WTC11 (cell line): ENCODE measurements at regions of chr15 and their contacts with region 1.

Region 1: DNA sequence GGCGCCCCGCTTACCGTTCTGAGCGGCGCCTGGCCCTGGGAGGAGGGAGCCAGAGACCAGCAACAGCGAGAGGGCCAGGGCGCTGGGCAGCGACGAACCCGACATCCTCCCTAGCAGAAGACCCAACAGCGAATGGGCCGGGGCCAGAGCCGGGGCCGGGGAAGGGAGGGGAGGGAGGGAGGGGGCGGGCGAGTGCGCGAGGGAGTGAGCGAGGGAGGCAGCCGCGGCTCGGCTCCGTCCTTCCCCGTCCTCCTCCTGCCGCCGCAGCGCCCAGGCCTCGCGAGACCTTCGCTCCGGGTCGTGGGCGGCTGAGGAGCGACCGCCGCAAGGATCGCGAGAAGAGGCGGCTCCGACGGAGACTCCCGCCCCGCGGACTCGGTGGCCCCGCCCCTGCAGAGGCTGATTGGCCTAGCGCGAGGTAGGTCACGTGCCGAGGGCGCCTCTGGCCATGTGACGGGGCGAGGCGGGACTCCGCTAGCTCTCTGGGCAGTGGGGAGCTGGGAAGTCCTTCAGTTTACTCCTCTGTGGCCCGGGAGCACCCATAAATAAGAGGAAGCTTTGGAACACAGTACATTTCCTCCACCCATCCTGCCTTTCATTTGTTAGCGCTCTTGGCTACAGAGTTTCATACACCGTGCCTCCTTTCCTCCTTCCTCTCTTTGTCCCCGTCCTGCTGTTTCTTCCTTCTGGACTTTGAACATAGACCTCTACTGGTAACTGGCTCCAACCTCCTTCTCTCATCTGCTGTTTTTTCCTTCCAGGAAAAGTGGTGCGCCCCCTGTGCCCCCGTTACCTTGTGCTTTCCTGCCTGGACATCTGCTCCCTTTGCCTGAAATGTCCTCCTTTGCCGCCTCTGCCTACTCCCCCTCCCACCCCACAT is at the start of gene NPTN:
- DNase-seq: peak; percentile 99
- ATAC-seq: peak; percentile 92
- H3K4me3 Mint-ChIP-seq: peak within 1 kb of the TSS; percentile 76
- H3K27ac Mint-ChIP-seq: peak within 1 kb of the TSS; percentile 97
- H3K4me1 Mint-ChIP-seq: peaks cover 57% of the 10 kb centered on the region
- H3K27me3 Mint-ChIP-seq: peaks cover 4% of the 10 kb centered on the region
- CTCF ChIP-seq: no peak
- total RNA-seq, gene NPTN: 96.1 to 116 TPM (median 102 TPM) in 3 replicates

Region 2: DNA sequence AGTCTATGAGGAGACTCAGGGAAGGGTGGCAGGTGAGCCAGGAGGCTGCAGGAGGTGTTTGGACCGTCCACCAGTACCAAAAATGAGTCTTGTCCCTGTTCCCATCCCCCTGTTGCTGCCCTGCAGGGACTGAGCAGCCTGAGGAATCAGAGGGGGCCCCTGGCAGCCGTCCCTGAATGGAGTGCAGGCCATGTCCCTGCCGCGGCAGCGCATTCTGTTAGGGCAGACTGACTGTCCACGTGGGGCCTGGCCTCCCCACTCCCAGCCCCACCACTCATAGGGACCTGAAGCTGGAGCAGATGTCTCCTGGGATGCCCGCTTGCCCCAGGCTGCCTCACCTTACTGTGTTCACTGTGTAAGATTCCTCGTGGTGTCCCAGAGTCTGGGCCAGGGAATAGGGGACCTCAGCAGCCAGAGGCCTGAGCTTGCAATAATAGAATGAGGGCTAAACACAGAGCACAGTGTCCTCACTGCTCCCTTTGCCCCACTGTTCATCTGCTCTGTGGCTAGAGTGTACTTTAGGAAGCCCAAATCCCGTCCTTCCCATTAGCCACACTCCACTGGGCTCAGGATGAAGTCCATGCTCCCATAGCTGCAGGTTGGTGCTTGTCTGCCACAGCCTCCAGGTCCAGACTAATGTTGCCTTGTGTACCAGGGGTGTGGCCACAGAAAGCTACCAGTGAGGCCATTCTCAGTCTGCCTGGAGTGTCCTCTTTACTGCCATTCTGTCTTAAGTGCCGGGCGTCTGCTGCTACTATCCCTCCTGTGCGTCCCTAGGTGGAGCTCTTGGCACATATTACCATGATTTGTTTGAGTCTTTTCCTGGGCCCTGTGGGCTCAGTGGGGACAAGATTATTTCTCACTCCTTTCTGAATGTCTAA is 327.8 kb before region 1 on chr15:
- CTCF ChIA-PET with region 1: interaction called, 13 read pairs
- POLR2A ChIA-PET with region 1: no interaction called
- DNase-seq: peak; percentile 57
- ATAC-seq: peak; percentile 95
- H3K4me3 Mint-ChIP-seq: no peak overlapping the region
- H3K27ac Mint-ChIP-seq: no peak overlapping the region
- H3K4me1 Mint-ChIP-seq: peaks cover 3% of the 10 kb centered on the region
- H3K27me3 Mint-ChIP-seq: no peaks in the 10 kb centered on the region
- CTCF ChIP-seq: 0 out of 2 replicates have a peak, but pooled peaks have one; percentile 14

Region 3: DNA sequence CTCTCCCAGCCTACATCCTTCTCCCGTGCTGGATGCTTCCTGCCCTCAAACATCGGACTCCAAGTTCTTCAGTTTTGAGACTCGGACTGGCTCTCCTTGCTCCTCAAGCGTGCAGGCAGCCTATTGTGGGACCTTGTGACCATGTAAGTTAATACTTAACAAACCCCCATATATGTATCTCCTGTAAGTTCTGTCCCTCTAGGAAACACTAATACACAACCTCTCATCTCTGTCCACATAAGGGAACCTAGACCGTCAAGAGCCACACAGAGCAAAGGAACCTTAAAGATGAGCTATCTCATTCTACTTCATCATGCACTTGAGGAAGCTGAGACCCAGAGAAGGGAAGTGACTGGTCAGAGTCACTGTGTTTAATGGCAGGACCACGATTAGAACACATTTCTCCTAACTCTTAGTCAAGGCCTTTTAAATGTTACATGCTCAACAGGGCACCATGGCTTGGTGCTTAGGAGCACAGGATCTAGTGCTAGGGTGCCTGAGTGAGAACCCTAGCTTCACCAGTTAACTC is 50.4 kb before region 1 on chr15:
- CTCF ChIA-PET with region 1: no interaction called
- POLR2A ChIA-PET with region 1: no interaction called
- DNase-seq: no peak
- ATAC-seq: no peak
- H3K4me3 Mint-ChIP-seq: no peak overlapping the region
- H3K27ac Mint-ChIP-seq: no peak overlapping the region
- H3K4me1 Mint-ChIP-seq: peaks cover 8% of the 10 kb centered on the region
- H3K27me3 Mint-ChIP-seq: no peaks in the 10 kb centered on the region
- CTCF ChIP-seq: no peak

Region 4: DNA sequence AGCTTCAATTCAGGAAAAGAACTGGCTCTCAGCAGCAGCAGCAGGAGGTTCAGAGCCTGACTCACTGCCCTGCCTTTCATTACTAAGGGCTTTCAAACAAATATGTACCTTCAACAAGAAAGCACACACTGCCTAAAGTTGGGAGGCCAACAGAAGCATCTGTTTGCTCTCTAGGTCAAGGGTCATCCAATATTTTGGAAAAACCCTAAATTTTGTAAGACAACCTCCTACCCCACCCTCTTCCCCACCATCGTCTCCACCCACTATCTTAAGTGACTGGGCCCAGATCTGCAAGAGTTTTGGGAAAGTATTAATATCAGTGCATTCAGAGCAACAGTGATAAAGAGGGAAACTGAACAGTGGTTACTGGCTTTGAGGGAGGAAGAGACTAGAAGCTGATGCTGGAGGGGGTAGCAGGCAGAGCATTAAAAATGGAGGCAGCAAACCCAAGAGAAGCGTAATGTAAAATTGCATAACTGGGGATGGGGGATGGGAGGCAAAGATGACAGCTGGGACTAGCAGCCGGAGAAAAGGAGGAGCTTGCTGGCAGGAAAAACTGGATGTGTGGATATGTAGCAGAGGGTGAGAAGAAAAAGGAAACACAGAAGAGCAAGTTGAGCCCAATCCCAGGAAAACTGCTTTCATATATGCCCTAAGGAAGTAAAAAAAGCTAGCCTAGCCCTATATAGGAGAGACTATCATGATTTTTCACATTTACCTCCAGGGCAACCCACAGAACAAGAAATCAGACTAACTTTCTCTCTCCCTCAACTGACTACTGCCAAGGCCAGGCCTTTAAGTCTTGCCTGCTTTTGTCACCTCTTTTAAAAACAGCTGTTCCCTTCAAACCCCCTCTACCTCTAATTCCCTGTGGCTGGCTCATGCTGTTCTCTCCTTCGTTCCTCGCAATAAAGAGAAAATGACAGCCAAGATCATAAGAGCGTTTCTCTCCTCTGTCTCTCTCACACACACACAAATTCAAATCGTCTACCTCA is 31.6 kb before region 1 on chr15:
- CTCF ChIA-PET with region 1: interaction called, 74 read pairs
- POLR2A ChIA-PET with region 1: no interaction called
- DNase-seq: no peak
- ATAC-seq: peak; percentile 30
- H3K4me3 Mint-ChIP-seq: no peak overlapping the region
- H3K27ac Mint-ChIP-seq: no peak overlapping the region
- H3K4me1 Mint-ChIP-seq: peaks cover 50% of the 10 kb centered on the region
- H3K27me3 Mint-ChIP-seq: no peaks in the 10 kb centered on the region
- CTCF ChIP-seq: no peak

Region 5: GRCh38 chr15:73650416-73651126 is 17.2 kb after region 1 on chr15:
- CTCF ChIA-PET with region 1: interaction called, 33 read pairs
- POLR2A ChIA-PET with region 1: no interaction called
- DNase-seq: no peak
- ATAC-seq: no peak
- H3K4me3 Mint-ChIP-seq: no peak overlapping the region
- H3K27ac Mint-ChIP-seq: no peak overlapping the region
- H3K4me1 Mint-ChIP-seq: peaks cover 4% of the 10 kb centered on the region; the same call in 1 of the 2 replicates
- H3K27me3 Mint-ChIP-seq: 0 out of 2 replicates have a peak, but pooled peaks cover 3% of the 10 kb centered on the region
- CTCF ChIP-seq: no peak

Region 6: DNA sequence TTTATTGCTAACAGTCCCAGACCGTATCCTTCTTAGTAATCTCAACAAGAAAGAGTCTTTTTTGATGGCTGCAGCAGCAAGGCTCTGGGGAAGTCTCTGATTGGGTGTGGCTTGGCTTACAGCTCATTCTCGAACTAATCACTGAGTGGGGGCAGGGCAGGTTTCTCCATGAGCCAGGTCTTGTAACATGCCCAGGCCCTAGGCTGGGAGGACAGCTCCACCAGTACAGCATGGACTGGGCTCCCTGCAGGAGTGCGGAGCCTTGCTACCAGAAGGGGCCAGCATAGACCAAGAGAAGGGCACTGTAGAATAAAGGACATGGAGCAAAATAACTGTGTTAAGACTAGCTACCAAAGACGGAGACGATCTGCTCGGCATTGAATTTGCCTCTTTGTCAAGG is 58.0 kb after region 1 on chr15:
- CTCF ChIA-PET with region 1: interaction called, 142 read pairs
- POLR2A ChIA-PET with region 1: interaction called, 3 read pairs
- DNase-seq: peak; percentile 70
- ATAC-seq: peak; percentile 98
- H3K4me3 Mint-ChIP-seq: no peak overlapping the region
- H3K27ac Mint-ChIP-seq: no peak overlapping the region
- H3K4me1 Mint-ChIP-seq: peaks cover 43% of the 10 kb centered on the region
- H3K27me3 Mint-ChIP-seq: no peaks in the 10 kb centered on the region
- CTCF ChIP-seq: no peak

Region 7: DNA sequence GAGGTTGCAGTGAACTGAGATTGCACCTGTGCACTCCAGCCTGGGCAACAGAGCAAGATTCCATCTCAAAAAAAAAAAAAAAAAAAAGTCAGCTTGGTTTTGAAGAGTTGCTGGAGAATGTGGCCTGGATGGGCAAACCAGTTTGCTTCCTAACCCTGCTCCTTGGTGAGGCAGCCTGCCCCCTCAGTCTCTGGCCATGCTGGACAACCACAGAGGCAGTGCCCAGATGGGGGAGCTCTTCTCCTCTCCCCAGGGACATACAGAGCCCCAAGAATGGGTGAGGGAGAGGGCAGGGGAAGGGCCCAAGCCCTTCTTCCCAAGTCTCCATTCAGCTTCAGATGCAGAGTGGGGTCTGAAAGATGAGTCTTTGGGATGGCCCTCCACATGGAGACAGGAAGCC is 78.7 kb after region 1 on chr15:
- CTCF ChIA-PET with region 1: interaction called, 15 read pairs
- POLR2A ChIA-PET with region 1: no interaction called
- DNase-seq: peak; percentile 48
- ATAC-seq: peak; percentile 68
- H3K4me3 Mint-ChIP-seq: no peak overlapping the region
- H3K27ac Mint-ChIP-seq: peak overlapping the region; percentile 45; the same call in 1 of the 2 replicates
- H3K4me1 Mint-ChIP-seq: no peaks in the 10 kb centered on the region
- H3K27me3 Mint-ChIP-seq: no peaks in the 10 kb centered on the region
- CTCF ChIP-seq: no peak

Region 8: DNA sequence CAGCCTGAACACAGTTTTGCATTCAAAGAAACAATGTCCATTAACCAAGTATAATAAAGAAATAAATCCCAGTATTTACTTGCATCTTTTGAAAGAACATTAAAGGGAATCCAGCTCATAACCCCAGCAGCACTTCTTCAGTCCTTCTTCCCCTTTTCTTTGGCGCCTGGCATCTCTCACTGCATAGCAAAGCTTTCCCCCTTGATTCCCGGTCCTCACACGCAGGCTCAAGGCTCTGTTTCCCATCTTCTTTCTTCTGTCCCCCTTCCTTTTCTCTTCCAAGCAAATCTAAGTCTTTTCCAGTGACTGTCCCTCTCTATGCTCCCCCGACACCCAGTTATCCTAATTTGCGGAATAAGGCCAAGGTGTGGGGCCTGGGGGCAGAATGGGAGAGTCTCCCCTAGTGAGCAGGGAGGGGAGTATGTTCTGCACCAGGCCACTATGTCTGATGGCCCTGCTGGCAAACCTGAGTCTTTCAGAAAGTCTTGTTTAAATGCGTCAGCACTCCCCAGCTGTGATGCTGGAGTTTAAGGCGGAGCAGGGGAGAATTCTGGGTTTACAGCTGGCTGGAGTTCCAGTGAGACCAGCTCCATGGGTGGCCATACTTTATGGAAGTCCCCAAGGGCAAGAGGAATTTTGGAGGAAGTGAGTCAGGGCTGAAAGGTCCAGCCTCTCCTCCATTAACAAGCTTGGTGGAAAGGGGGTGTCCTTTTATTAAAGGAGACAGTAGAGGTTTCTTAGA is 406.9 kb after region 1 on chr15:
- CTCF ChIA-PET with region 1: no interaction called
- POLR2A ChIA-PET with region 1: no interaction called
- DNase-seq: no peak
- ATAC-seq: no peak
- H3K4me3 Mint-ChIP-seq: no peak overlapping the region
- H3K27ac Mint-ChIP-seq: peak overlapping the region; percentile 38; the same call in 1 of the 2 replicates
- H3K4me1 Mint-ChIP-seq: peaks cover 39% of the 10 kb centered on the region
- H3K27me3 Mint-ChIP-seq: peaks cover 3% of the 10 kb centered on the region; the same call in 1 of the 2 replicates
- CTCF ChIP-seq: no peak